Ascending aorta (tissue), 2 donors: ENCODE measurements at regions of chr12 and their contacts with region 1.

Region 1: GRCh38 chr12:132828706-132829534 is at the start of gene GOLGA3:
- DNase-seq: peak; percentile 54 to 95
- H3K4me3 ChIP-seq: peak within 1 kb of the TSS; percentile 79 to 91
- H3K27ac ChIP-seq: peak within 1 kb of the TSS; percentile 98 to 99
- H3K4me1 ChIP-seq: peaks cover 9 to 16% of the 10 kb centered on the region in 2 donors
- H3K27me3 ChIP-seq: no peaks in the 10 kb centered on the region
- CTCF ChIP-seq: no peak
- total RNA-seq, gene GOLGA3: 173 TPM

Region 2: GRCh38 chr12:132687208-132688164 is 141.4 kb before region 1 on chr12 and contains the starts of genes POLE and PXMP2:
- intact Hi-C with region 1: loop called (anchors 5 kb)
- DNase-seq: peak; percentile 84 to 98
- H3K4me3 ChIP-seq: peak within 1 kb of the TSS; percentile 91 to 94
- H3K27ac ChIP-seq: peak within 1 kb of the TSS; percentile 67 to 75
- H3K4me1 ChIP-seq: peaks cover 4 to 19% of the 10 kb centered on the region in 2 donors
- H3K27me3 ChIP-seq: no peaks in the 10 kb centered on the region
- CTCF ChIP-seq: peak in 1 of 3 experiments; percentile 44
- total RNA-seq, gene POLE: 115 TPM
- total RNA-seq, gene PXMP2: 18.8 TPM

Region 3: DNA sequence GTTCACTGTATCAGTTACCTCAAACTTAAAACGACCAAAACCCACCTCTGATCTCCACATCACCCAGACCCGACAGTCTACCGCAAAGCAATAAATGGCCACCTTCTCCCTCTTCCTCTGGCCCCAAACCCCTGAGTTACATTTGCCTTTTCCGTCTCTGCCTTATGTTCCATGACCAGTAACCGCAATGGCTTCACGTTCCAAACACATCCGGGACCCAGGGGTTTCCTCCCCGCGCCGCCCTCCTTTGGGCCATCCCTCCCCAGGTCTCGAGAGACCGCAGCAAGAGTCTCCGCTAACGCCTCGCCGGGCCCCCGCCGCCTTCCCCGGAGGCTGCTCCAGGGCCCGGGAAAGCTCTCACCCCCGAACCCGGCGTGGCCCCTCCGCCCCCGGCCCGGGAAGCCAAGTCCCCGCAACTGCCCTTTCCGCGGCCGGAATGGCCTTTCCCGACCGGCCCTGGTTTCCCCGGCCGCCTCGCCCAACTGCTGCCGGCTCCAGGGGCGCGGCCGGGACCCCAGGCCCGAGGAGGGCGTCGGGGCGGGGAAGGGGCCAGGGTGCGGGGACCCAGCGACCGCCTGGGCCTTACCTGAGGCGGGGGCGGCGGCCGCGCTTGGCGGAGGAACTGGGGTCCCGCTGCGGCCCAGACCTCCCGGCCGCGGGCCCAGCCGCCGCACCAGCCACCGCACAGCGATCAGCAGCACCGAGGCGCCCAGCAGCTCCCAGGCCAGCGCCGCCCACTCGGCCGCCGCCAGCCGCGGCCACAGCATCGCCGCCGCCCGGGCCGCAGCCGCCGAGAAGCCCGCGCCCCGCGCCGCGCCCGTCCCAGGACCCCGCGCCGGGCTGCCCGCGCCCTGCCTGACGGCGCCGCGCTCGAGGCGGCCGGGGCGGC is 67.6 kb before region 1 on chr12 and contains the start of gene ANKLE2:
- intact Hi-C with region 1: loop called (anchors 2 kb)
- DNase-seq: peak in 1 of 2 donors; percentile 73
- H3K4me3 ChIP-seq: peak within 1 kb of the TSS; percentile 100
- H3K27ac ChIP-seq: peak within 1 kb of the TSS; percentile 97 to 99
- H3K4me1 ChIP-seq: peaks cover 13% of the 10 kb centered on the region in 2 donors
- H3K27me3 ChIP-seq: no peaks in the 10 kb centered on the region
- CTCF ChIP-seq: no peak
- total RNA-seq, gene ANKLE2: 54.2 TPM

Region 4: DNA sequence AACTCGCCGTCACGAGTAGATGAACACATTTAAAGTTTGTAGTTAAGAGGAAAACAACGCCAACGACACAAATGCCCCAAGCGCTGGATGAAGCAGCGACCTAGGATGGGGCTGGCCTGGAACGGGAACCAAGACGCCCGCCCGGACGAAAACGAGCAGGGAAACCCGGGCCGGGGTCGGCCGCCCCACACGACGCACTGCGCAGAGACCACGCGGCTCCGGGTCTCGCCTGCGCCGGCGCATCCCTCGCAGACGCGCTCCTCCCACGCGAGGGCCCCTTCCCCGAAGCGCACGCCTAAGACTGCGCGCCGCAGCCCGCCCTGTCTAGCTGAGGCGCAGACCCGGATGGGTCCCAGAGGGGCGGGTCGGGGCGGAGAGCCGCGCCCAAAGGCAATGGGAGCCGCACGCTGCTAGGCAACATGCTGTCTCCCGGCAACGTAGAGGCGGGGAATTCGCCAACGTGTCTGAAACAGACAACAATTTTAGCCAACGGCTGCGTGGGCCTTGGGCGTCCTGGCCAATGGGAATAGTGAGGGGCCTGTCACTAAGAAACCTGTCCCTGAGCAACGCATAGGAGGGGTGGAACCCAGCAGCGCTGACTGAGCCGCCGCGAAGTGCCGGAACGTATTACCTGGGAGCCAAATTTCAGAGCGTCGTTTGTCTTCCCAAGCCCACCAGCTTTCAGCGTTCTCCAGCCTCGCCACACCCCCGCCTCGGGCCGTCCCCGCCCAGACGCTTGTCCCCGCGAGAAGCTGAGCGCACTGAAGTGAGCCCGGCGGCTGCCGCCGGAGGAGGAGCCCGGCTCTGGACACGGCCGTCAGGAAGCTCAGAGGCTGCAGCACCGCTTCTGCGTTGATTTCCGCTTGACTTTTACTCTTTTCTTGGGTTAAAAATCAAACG is 79.5 kb after region 1 on chr12:
- intact Hi-C with region 1: loop called (anchors 1 kb)
- DNase-seq: peak; percentile 83 to 96
- H3K4me3 ChIP-seq: peak overlapping the region; percentile 79 to 86
- H3K27ac ChIP-seq: peak overlapping the region; percentile 83 to 85
- H3K4me1 ChIP-seq: peaks cover 0 to 6% of the 10 kb centered on the region in 2 donors
- H3K27me3 ChIP-seq: no peaks in the 10 kb centered on the region
- CTCF ChIP-seq: no peak

Region 5: DNA sequence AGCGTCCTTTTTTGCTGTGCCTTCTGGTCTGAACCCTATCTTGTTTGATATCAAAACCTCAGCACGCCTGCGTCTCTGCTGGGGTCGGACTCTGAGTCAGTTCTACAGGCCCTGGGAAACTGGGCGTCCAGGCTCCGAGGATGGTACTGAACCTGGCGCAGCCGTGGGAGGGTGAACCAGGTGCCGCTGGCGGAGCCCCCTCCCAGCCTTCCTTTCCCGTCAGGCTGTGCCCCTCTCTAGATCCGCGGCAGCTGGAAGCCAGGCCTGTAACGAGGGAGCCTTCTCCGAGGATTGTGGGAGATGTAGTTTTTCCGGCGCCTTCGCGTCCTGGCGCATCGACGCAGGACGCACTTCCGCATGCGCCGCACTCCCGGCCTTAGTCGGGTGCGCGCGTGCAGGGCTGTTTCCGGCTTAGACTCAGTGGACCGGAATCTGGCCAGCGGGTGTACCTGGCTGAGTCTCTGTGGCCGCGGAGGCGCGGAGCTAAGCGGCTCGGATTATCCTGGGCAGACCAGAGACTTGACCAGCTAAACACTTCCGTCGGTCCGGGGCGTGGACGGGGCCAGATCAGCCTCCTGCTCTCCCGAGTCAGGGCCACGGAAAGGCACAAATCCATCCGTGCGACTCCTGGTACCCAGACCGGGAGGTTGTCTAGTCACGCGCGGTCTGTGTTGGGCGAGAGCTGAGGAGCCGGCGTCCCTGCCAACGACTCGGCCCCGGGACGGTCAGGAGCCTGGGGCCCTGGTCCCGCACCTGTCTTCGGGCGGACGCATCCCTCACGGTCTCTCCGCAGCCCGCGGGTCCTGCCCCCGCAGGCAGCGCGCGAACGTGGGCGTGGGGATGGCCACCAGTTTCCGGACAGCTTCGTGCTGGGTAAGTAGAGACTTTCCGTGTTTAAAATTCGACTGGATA is 157.3 kb after region 1 on chr12 and contains the start of gene ZNF26:
- intact Hi-C with region 1: loop called (anchors 2 kb)
- DNase-seq: peak; percentile 64 to 94
- H3K4me3 ChIP-seq: peak within 1 kb of the TSS; percentile 81 to 84
- H3K27ac ChIP-seq: peak within 1 kb of the TSS; percentile 84 to 93
- H3K4me1 ChIP-seq: peaks cover 3 to 6% of the 10 kb centered on the region in 2 donors
- H3K27me3 ChIP-seq: no peaks in the 10 kb centered on the region
- CTCF ChIP-seq: no peak
- total RNA-seq, gene ZNF26: 73.4 TPM

Region 6: DNA sequence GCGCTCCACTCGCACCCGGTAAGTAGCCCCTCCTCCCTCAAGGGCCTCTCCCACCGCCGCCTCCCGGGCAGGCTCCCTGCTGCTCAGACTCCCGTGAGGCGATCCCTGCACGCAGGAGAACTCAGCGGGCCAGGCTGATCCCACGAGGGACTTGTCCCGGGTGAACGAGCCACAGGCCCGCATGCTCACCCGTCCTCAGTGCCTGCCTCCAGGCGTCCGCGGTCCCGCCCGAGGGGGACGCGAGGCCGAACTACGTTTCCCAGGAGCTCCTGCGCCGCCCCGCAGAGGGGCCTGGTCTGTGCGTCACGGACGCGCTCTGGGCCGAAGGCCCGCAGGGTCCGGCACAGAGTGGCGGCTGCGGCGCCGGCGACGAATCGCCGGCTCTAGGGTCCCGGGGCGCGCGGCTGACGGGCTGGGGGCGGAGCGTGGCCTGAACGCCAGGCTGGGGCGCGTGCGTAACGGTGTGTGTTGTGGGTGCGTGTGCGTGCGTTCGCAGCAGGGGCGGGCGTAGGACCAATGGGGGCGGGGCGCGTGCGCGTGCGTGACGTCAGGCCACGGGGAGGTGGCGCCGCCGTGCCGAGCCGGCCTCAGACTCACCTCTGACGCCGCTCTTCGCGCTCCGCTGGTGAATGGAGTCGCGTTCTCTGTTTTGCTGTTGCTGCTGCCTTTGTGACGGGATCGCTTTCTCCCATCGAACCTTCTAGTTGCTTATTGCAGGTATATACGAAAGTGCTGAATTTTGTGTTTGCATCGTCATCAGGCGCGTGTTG is 301.3 kb after region 1 on chr12 and contains the starts of genes ZNF10 and ZNF891:
- intact Hi-C with region 1: loop called (anchors 2 kb)
- DNase-seq: peak; percentile 78 to 97
- H3K4me3 ChIP-seq: peak within 1 kb of the TSS; percentile 90 to 94
- H3K27ac ChIP-seq: peak within 1 kb of the TSS; percentile 89 to 93
- H3K4me1 ChIP-seq: peaks cover 0 to 7% of the 10 kb centered on the region in 2 donors
- H3K27me3 ChIP-seq: no peaks in the 10 kb centered on the region
- CTCF ChIP-seq: peak in 1 of 3 experiments; percentile 3
- total RNA-seq, gene ZNF10: 3.8 TPM
- total RNA-seq, gene ZNF891: 2.0 TPM